ENCODE measurements at regions of chr2 and their contacts with region 1.

Region 1: DNA sequence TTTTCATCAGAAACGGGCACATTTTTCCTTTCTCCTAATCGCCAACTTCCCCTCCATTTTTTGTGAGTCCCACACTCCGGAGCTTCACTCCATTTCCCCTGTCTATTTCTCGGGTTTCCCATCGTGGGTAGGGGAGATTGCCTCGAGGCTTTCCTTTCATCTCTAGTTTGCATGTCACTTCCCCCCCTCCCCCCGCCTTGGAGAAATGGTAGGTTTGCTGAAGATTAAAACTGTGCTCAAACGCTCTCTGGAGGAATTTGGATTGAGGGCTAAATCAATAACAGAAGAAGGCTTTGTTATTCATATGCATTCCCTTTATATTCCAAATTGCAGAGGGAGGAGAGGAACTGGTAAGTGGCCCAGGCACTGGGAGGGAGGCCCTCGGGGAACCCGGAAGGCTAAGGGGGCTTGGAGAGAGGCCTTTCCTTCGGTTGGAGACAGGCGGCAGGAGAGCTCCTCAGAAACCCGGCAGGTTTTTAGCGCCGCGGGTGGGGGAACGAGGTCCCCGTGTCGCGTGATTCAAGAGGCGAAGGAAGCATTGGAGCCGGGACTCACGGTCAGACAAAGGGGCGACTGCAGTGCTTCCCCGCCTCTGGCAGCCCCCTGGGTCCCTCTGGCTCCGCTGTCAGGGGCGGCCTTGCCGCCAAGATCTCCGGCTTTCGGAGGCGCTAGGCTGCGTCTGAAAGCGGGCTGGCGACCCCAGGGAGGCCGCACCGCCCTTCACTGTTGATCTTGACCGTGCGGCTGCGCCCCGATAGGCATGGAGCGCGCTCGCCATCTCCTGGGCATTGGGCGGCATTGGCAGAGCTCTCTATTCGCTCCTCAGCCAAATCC is 2.4 kb upstream of the HOXD12 start:
- DNase-seq: no peak
- H3K4me3 Mint-ChIP-seq: peak overlapping the region; percentile 45
- H3K27ac Mint-ChIP-seq: no peak overlapping the region
- H3K4me1 Mint-ChIP-seq: peaks cover 15% of the 10 kb centered on the region
- H3K27me3 Mint-ChIP-seq: peaks cover 86% of the 10 kb centered on the region

Region 2: DNA sequence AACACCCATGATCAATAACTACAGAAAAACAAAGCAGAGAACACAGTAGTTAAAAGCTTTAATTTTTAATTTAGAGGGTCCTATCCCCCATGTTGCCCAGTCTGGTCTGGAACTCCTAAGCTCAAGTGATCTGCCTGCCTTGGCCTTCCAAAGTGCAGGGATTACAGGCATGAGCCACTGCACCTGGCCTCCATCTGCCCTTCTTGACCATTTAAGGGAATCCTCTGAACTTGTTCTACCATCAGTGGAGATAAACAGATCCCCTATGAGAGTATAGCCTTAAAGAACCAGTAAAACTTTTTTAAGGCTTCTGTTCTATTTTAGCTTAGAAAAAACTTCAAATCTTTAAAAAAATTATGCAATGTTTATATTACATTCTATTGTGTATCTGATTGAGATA is 902.2 kb before region 1 on chr2:
- intact Hi-C with region 1: no loop called
- DNase-seq: no peak
- H3K4me3 Mint-ChIP-seq: no peak overlapping the region
- H3K27ac Mint-ChIP-seq: no peak overlapping the region
- H3K4me1 Mint-ChIP-seq: no peaks in the 10 kb centered on the region
- H3K27me3 Mint-ChIP-seq: peaks cover 33% of the 10 kb centered on the region

Region 3: DNA sequence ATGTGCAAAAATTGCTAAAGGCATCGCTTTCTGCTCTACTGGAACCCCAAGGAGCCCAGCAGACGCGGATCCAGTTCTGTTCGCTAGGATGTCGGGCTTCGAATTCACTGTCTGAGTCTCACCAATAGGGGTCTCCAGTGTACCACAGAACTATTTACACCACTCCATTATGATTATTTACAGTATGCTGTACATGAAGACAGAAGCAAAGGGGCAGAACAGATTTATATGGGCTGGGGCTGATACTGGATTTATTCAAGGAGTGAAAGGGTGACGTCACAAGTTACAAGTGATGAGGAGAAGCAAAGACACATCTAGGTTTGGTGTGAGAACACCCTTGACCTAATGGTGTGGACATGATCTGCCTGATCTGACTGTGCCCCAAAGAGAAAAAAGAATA is 730.4 kb before region 1 on chr2:
- intact Hi-C with region 1: loop called (anchors 2 kb)
- DNase-seq: peak; percentile 10
- H3K4me3 Mint-ChIP-seq: no peak overlapping the region
- H3K27ac Mint-ChIP-seq: no peak overlapping the region
- H3K4me1 Mint-ChIP-seq: no peaks in the 10 kb centered on the region
- H3K27me3 Mint-ChIP-seq: peaks cover 18% of the 10 kb centered on the region

Region 4: GRCh38 chr2:175690113-175690837 is 406.9 kb before region 1 on chr2:
- intact Hi-C with region 1: loop called (anchors 1 kb)
- DNase-seq: no peak
- H3K4me3 Mint-ChIP-seq: no peak overlapping the region
- H3K27ac Mint-ChIP-seq: no peak overlapping the region
- H3K4me1 Mint-ChIP-seq: no peaks in the 10 kb centered on the region
- H3K27me3 Mint-ChIP-seq: peaks cover 11% of the 10 kb centered on the region

Region 5: GRCh38 chr2:175976391-175977157 is 120.6 kb before region 1 on chr2:
- intact Hi-C with region 1: no loop called
- DNase-seq: no peak
- H3K4me3 Mint-ChIP-seq: no peak overlapping the region
- H3K27ac Mint-ChIP-seq: no peak overlapping the region
- H3K4me1 Mint-ChIP-seq: no peaks in the 10 kb centered on the region
- H3K27me3 Mint-ChIP-seq: no peaks in the 10 kb centered on the region

Region 6: GRCh38 chr2:176018708-176019107 is 78.5 kb before region 1 on chr2:
- intact Hi-C with region 1: no loop called
- DNase-seq: no peak
- H3K4me3 Mint-ChIP-seq: no peak overlapping the region
- H3K27ac Mint-ChIP-seq: no peak overlapping the region
- H3K4me1 Mint-ChIP-seq: no peaks in the 10 kb centered on the region
- H3K27me3 Mint-ChIP-seq: peaks cover 10% of the 10 kb centered on the region

Region 7: DNA sequence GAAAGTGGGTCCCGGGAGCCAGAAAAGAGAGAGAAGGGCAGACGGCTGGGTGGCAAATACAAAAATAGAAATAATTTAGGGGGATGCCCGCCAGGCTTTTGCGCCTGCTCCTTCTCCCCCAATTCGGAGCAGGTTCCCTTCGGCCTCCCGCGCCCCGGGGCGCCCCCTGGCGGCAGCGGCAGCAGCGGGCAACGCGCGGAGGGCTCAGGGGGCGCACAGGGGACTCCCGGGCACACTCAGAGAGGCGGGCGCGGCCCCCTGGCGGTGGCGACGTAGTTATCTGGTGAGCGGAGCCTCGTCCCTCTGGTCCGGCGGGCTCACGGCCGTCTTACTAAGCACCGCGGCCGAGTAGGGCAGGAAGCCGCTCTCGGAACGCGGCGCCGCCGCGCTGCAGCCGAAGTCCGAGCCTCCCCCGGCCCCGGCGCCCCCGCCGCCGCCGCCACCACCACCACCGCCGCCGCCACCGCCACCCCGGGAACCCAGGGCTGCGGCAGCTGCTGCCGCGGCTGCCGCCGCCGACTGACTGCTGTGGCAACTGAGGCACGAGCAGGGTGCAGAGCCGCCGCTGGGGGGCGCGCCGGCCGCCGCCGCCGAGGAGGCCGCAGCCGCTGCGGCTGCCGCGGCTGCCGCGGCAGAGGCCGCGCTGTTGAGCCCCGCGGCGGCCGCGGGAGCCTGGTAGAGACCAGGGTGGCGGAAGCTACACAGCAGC is 17.2 kb before region 1 on chr2:
- intact Hi-C with region 1: loop called (anchors 2 kb)
- DNase-seq: no peak
- H3K4me3 Mint-ChIP-seq: no peak overlapping the region
- H3K27ac Mint-ChIP-seq: peak overlapping the region; percentile 76
- H3K4me1 Mint-ChIP-seq: peaks cover 5% of the 10 kb centered on the region
- H3K27me3 Mint-ChIP-seq: peaks cover 69% of the 10 kb centered on the region

Region 8: DNA sequence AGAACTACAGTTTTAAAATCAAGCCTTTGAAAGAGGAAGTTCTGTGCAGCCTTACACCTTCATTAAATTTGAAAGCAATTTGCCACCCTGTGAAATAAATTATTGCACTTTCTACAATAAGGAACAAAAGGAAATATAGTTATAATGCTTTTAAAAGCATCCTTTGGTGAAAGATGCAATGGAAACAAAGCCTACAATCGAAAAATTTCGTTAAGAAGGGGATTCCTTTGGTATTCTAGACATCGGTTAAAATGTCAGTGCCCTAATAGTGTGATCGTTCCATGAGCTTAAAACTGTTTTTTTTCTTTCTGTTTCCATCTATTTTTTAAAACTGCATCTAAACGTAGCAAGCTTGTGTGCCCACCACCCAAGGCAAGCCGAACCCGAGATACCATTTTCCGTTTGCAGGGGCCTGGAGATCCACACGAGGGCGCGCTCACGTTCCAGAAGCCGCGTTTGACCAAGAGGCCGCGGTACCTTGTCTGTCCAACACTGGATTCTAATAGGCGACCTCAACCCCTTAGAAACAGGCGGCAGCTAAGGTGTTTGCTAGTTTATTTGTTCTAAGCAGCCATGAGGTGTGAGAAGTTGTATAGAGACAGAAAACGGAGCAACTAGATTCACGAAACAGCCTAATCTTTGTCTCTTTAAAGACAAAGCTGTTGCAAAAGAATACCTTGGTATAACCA is 13.9 kb after region 1 on chr2:
- intact Hi-C with region 1: loop called (anchors 2 kb)
- DNase-seq: no peak
- H3K4me3 Mint-ChIP-seq: no peak overlapping the region
- H3K27ac Mint-ChIP-seq: no peak overlapping the region
- H3K4me1 Mint-ChIP-seq: peaks cover 6% of the 10 kb centered on the region
- H3K27me3 Mint-ChIP-seq: peaks cover 73% of the 10 kb centered on the region

Measured in activated T-helper 2 cell treated with anti-CD3 and anti-CD28 coated beads, Interferon-gamma antibody, Interleukin-2, Interleukin-4, amounts not matched to agents 10 μg/mL and 5 μg/mL and 100 μg/mL, durations not matched to agents 14 hours and 24 hours and 36 hours (primary cell).